Gastrocnemius medialis (tissue), 4 donors: ENCODE measurements at regions of chr21 and their contacts with region 1.

Region 1: DNA sequence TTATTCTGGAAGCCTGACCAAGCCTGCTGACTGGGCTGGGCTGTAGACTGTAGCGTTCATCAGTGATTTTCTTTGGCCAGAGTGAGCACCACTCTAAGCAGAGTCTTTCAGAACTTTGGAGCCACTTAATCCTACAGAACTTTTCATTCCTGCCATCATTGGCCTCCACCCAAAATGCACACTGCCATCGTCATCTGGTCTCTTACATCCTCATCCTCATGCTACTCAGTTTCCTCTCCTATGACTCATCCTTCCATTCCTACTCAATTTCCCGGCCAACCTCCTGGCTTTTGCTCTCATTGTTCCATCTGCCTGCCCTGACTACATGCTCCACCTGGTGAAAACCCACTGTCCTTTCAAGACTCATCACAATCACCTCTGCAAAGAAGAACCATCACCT is 233.8 kb upstream of the USP25 start:
- DNase-seq: no peak
- ATAC-seq: no peak
- H3K4me3 ChIP-seq: no peak overlapping the region
- H3K27ac ChIP-seq: no peak overlapping the region
- H3K4me1 ChIP-seq: no peaks in the 10 kb centered on the region
- H3K27me3 ChIP-seq: no peaks in the 10 kb centered on the region
- CTCF ChIP-seq: no peak
- POLR2A ChIP-seq: no peak

Region 2: DNA sequence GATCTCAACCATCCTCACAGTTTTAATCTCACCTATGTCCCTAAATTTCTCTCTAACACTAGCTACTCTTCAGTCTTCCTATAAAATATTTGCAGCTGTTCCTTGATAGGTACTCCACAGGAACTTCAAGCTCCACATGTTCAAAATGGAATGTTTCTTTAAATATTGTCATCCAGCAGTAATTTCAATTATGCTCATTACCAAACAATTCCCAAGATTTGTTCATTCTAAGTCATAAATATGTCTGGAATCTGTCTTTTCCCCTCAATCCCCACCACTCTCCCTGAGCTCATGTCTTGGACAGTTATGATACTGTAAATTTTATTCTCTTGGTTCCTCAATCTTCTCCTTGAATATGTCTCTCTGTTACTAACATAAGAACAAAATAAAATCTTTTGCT is 645.6 kb before region 1 on chr21:
- in situ Hi-C with region 1: loop called in 1 of 4 experiments (anchors 10 kb)
- intact Hi-C with region 1: no loop called
- DNase-seq: no peak
- ATAC-seq: no peak
- H3K4me3 ChIP-seq: no peak overlapping the region
- H3K27ac ChIP-seq: no peak overlapping the region
- H3K4me1 ChIP-seq: no peaks in the 10 kb centered on the region
- H3K27me3 ChIP-seq: no peaks in the 10 kb centered on the region
- CTCF ChIP-seq: no peak
- POLR2A ChIP-seq: no peak

Region 3: DNA sequence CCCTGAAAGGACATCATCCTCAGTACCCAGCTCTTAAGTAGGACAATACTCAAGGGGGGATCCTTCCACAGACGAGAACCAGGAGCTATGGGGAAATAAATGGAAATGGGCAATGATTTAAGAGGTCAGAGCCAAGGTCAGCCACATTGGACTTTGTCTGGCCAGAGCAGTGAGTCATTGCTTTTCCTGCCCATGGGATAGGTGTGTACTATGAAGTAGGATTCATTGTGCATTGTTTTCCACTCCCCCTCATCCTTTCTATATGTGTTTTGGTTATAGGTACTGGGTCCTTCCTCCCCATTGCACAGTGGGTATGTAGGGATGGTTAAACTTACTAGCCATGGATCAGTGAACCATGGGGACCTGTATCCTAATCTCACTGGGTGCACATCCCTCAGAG is 95.1 kb before region 1 on chr21:
- in situ Hi-C with region 1: no loop called
- intact Hi-C with region 1: no loop called
- DNase-seq: no peak
- ATAC-seq: no peak
- H3K4me3 ChIP-seq: no peak overlapping the region
- H3K27ac ChIP-seq: no peak overlapping the region
- H3K4me1 ChIP-seq: peaks cover 0 to 3% of the 10 kb centered on the region in 2 donors
- H3K27me3 ChIP-seq: no peaks in the 10 kb centered on the region
- CTCF ChIP-seq: no peak
- POLR2A ChIP-seq: no peak

Region 4: DNA sequence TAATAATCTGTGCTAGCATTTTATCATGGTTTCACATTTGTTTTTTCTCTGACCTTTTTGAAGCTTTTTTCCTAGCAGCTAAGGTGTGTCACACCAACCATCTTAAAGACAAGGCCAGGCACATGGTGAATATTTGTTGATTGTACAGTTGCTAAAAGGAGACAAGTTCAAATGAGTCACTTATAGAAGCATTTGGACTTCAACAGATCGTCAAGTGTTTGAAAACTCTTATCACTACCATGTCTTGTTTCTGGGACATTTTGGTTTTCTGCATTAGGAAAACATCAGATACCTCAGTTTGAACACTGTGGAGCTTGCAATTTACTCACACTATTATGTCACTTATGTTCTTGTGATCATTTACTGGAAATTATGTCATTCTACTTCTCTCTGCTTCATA is 641.1 kb after region 1 on chr21:
- in situ Hi-C with region 1: no loop called
- intact Hi-C with region 1: no loop called
- DNase-seq: no peak
- ATAC-seq: no peak
- H3K4me3 ChIP-seq: no peak overlapping the region
- H3K27ac ChIP-seq: no peak overlapping the region
- H3K4me1 ChIP-seq: no peaks in the 10 kb centered on the region
- H3K27me3 ChIP-seq: no peaks in the 10 kb centered on the region
- CTCF ChIP-seq: no peak
- POLR2A ChIP-seq: no peak